Activated naive CD4-positive, alpha-beta T cell treated with anti-CD3 and anti-CD28 coated beads for 36 hours (primary cell): ENCODE measurements at regions of chr2 and their contacts with region 1.

Region 1: GRCh38 chr2:71510196-71510807 is 56.9 kb downstream of the DYSF start:
- DNase-seq: peak; percentile 80
- H3K4me3 Mint-ChIP-seq: no peak overlapping the region
- H3K27ac Mint-ChIP-seq: no peak overlapping the region
- H3K4me1 Mint-ChIP-seq: no peaks in the 10 kb centered on the region
- H3K27me3 Mint-ChIP-seq: peaks cover 3% of the 10 kb centered on the region

Region 2: GRCh38 chr2:71299507-71299906 is 210.8 kb before region 1 on chr2:
- CTCF ChIA-PET with region 1: interaction called, 77 read pairs
- intact Hi-C with region 1: loop called (anchors 1 kb)
- DNase-seq: no peak
- H3K4me3 Mint-ChIP-seq: no peak overlapping the region
- H3K27ac Mint-ChIP-seq: no peak overlapping the region
- H3K4me1 Mint-ChIP-seq: no peaks in the 10 kb centered on the region
- H3K27me3 Mint-ChIP-seq: peaks cover 5% of the 10 kb centered on the region

Region 3: DNA sequence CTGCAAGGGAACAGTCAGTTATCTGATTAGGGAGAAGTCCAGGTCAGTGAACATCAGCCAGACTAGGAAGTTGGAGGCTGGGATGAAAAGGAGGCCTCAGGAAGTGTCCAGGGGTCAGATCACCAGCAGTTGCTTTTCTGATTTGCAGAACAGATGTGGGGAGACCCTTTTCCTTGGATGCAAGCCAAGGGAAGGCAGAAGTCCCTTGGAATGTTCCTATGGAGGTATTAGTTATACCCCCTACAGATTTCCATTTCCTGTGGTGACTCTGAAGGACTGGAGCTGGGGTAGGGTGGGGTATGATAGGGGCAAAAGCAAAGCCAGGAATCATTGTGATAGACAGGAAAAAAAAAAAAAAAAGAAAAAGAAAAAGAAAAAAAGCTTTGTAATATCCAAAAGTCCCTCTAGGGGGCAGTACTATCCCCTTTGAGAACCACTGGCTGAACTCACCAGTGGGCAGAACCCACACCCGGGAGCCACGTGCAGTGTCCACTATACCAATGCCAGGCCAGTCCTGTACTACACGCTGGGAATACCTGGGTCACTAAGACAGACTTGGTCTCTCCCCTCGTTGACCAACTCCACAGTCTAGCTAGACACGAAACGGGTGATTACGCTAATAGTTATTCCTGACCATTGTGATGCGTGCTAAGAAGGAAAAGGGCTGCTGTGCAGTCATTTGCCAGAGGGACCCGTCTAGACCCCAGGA is 49.6 kb before region 1 on chr2:
- CTCF ChIA-PET with region 1: interaction called, 70 read pairs
- intact Hi-C with region 1: loop called (anchors 1 kb)
- DNase-seq: no peak
- H3K4me3 Mint-ChIP-seq: no peak overlapping the region
- H3K27ac Mint-ChIP-seq: no peak overlapping the region
- H3K4me1 Mint-ChIP-seq: no peaks in the 10 kb centered on the region
- H3K27me3 Mint-ChIP-seq: peaks cover 15% of the 10 kb centered on the region

Region 4: GRCh38 chr2:71603311-71603811 is 93.1 kb after region 1 on chr2:
- CTCF ChIA-PET with region 1: no interaction called
- intact Hi-C with region 1: no loop called
- DNase-seq: no peak
- H3K4me3 Mint-ChIP-seq: no peak overlapping the region
- H3K27ac Mint-ChIP-seq: no peak overlapping the region
- H3K4me1 Mint-ChIP-seq: peaks cover 5% of the 10 kb centered on the region
- H3K27me3 Mint-ChIP-seq: peaks cover 15% of the 10 kb centered on the region